Posterior vena cava (tissue), 2 donors: ENCODE measurements at regions of chr4 and their contacts with region 1.

Region 1: DNA sequence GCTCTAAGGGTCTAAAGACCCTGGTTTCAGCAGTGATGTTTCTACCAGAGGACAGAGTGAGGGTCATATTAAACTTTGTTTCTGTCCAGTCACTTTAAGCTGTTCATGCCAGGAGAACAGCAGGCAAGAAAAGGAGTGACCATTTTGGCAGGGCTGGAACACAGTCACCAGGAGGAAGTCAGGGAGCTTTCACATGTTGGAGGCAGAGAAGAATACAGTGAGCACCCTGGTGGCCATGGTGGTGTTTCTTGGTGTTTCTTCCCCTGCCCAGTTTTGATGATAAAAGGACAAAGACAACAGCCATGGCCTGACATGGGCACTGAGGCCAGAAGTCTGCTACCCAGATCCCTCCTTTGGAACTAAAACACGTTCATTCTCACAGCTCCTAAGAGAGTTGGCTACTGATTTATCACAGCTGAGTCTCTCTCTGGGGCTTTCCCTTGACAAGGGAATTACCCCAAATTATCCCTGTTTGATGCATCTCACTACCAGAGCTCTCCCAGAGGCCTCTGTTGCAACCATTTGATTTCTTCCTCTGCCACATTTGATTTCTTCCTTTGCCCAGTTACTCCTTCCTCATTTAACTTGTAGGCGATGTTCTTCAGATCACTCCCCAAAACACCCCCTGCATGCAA is 106.4 kb upstream of the NWD2 start:
- DNase-seq: no peak

Region 2: DNA sequence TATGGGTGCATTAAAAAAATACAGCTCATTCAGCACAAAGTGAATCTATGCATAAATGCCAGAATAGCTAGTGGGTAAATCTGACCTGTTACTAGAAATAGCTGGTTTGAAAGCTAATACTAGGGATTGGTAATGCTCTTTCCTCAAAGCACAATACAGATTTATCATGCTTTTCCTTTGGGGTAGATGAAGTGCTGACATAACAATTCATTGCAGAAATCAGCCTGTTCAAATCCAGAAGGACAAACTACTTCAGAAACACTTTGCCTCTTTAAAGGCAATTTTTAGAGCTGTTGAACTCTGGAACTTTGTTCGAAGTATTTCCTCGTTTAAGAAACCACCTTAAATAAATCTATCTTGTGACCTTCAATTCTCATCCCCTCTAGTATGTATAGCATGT is 1851.7 kb before region 1 on chr4:
- intact Hi-C with region 1: loop called in 1 of 2 experiments (anchors 5 kb)
- DNase-seq: no peak

Region 3: DNA sequence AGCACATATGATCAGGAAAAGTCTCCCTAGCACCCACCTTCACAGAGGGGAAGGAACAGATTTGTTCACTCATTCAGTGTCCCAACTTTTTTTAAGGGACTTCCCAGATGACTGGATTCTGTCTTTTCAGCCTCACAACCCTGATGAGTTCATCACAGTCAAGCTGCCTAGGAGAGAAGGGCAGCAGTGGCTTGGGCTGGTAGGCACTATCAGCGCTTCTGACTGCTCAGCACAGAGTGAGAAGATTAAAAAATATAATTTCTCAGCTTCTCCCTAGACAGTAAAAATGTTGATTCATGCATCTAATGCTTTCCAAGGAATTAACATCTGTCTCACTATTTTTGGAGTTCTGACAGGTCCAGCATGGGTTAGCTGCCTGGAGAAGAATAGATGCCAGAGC is 528.5 kb before region 1 on chr4:
- intact Hi-C with region 1: no loop called
- DNase-seq: no peak

Region 4: DNA sequence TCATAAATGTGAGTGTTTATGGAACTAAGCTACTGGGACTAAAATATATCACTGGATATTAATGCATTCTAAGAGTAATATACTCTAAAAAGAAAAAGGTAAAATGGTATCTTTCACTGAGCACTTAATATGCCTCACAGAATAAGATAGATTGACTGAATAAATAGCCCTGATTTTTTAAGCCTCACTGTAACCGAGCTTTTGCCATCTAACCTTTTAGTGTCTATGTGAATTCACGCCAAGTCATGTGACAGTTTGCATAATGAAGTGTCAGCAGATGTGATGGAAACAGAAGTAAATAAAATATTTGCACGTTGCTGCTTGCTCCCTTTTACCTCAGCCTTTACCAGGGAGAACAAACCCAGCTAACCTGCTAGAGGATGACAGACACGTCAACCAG is 13.3 kb before region 1 on chr4:
- intact Hi-C with region 1: no loop called
- DNase-seq: no peak